A673 (cell line): ENCODE measurements at regions of chr12 and their contacts with region 1.

Region 1: DNA sequence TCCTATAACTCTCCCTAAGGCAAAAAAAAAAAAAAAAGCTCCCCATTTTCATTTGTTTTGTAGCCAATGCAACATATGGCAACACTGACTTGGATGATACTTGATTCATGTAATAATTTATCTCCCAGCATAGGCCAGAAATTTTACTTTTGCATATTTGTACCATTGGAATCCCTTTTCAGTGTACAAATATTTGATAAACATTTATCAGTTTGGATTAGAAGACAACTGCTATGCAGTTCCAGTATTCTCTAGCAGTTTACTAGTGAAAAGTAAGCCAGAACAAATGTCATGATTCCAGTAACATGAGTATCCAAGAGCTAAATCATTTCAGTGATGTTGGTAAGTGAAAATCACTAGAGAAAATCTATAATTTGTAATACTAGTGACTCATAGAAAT is 392.3 kb downstream of the CCER1 start:
- DNase-seq: no peak
- H3K4me3 ChIP-seq: no peak overlapping the region
- H3K27ac ChIP-seq: no peak overlapping the region
- H3K4me1 ChIP-seq: no peaks in the 10 kb centered on the region
- H3K27me3 ChIP-seq: no peaks in the 10 kb centered on the region
- CTCF ChIP-seq: no peak

Region 2: DNA sequence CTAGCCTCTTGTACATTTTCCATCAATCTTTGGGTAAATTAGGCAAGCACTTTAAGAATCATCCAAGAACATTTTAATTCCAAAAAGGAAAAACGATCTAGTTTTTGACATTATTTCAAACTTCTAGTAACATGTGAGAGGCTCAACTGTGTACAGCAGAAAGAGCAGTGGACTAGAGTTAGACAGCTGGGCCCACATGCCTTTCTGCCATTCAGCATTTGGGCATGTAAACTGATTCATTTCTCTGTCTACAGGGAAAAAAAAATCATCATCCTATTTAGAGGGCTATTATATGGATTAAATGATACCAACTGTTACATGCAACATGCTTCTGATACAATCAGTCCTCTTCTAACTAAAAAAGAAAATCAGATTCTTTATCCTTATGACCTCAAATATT is 871.7 kb before region 1 on chr12:
- CTCF ChIA-PET with region 1: no interaction called
- POLR2A ChIA-PET with region 1: interaction called, 10 read pairs
- intact Hi-C with region 1: no loop called
- DNase-seq: peak; percentile 22
- H3K4me3 ChIP-seq: no peak overlapping the region
- H3K27ac ChIP-seq: no peak overlapping the region
- H3K4me1 ChIP-seq: peaks cover 39% of the 10 kb centered on the region
- H3K27me3 ChIP-seq: no peaks in the 10 kb centered on the region
- CTCF ChIP-seq: no peak